Caco-2 (cell line): ENCODE measurements at regions of chr9 and their contacts with region 1.

Region 1: GRCh38 chr9:99184475-99185347 is 37.0 kb downstream of the ALG2 start:
- DNase-seq: peak; percentile 81 to 82
- H3K4me3 ChIP-seq: no peak overlapping the region
- H3K4me3 Mint-ChIP-seq: no peak overlapping the region
- H3K27ac Mint-ChIP-seq: no peak overlapping the region
- H3K4me1 ChIP-seq: peaks cover 11% of the 10 kb centered on the region
- H3K4me1 Mint-ChIP-seq: peaks cover 9% of the 10 kb centered on the region
- H3K27me3 ChIP-seq: no peaks in the 10 kb centered on the region
- H3K27me3 Mint-ChIP-seq: peaks cover 16% of the 10 kb centered on the region
- CTCF ChIP-seq: peak; percentile 93 to 94

Region 2: GRCh38 chr9:99162759-99163364 is 21.8 kb before region 1 on chr9:
- CTCF ChIA-PET with region 1: no interaction called
- POLR2A ChIA-PET with region 1: no interaction called
- intact Hi-C with region 1: no loop called
- DNase-seq: peak in 1 of 2 experiments; percentile 47
- H3K4me3 ChIP-seq: no peak overlapping the region
- H3K4me3 Mint-ChIP-seq: no peak overlapping the region
- H3K27ac Mint-ChIP-seq: no peak overlapping the region
- H3K4me1 ChIP-seq: peaks cover 6% of the 10 kb centered on the region
- H3K4me1 Mint-ChIP-seq: peaks cover 5% of the 10 kb centered on the region
- H3K27me3 ChIP-seq: no peaks in the 10 kb centered on the region; the same call in 1 of the 2 replicates
- H3K27me3 Mint-ChIP-seq: peaks cover 4% of the 10 kb centered on the region
- CTCF ChIP-seq: peak in 1 of 2 experiments; percentile 50

Region 3: GRCh38 chr9:99221621-99222415 is 37.1 kb after region 1 on chr9 and contains the starts of genes ALG2 and SEC61B:
- CTCF ChIA-PET with region 1: interaction called, 3 read pairs
- POLR2A ChIA-PET with region 1: no interaction called
- intact Hi-C with region 1: loop called (anchors 5 kb)
- DNase-seq: peak; percentile 94
- H3K4me3 ChIP-seq: peak within 1 kb of the TSS; percentile 72
- H3K4me3 Mint-ChIP-seq: peak within 1 kb of the TSS; percentile 100
- H3K27ac Mint-ChIP-seq: peak within 1 kb of the TSS; percentile 100
- H3K4me1 ChIP-seq: no peaks in the 10 kb centered on the region
- H3K4me1 Mint-ChIP-seq: peaks cover 21% of the 10 kb centered on the region
- H3K27me3 ChIP-seq: no peaks in the 10 kb centered on the region
- H3K27me3 Mint-ChIP-seq: no peaks in the 10 kb centered on the region
- CTCF ChIP-seq: no peak
- total RNA-seq, gene ALG2: 37.9 and 39.8 TPM in 2 replicates
- total RNA-seq, gene SEC61B: 167 and 170 TPM in 2 replicates

Region 4: GRCh38 chr9:99272836-99273235 is 88.1 kb after region 1 on chr9:
- CTCF ChIA-PET with region 1: no interaction called
- POLR2A ChIA-PET with region 1: no interaction called
- intact Hi-C with region 1: loop called (anchors 5 kb)
- DNase-seq: peak in 1 of 2 experiments; percentile 14
- H3K4me3 ChIP-seq: no peak overlapping the region
- H3K4me3 Mint-ChIP-seq: no peak overlapping the region
- H3K27ac Mint-ChIP-seq: no peak overlapping the region
- H3K4me1 ChIP-seq: peaks cover 14% of the 10 kb centered on the region
- H3K4me1 Mint-ChIP-seq: peaks cover 16% of the 10 kb centered on the region
- H3K27me3 ChIP-seq: no peaks in the 10 kb centered on the region
- H3K27me3 Mint-ChIP-seq: peaks cover 7% of the 10 kb centered on the region
- CTCF ChIP-seq: no peak

Region 5: GRCh38 chr9:100011062-100011681 is 826.5 kb after region 1 on chr9:
- CTCF ChIA-PET with region 1: interaction called, 4 read pairs
- POLR2A ChIA-PET with region 1: no interaction called
- intact Hi-C with region 1: loop called (anchors 5 kb)
- DNase-seq: peak in 1 of 2 experiments; percentile 47
- H3K4me3 ChIP-seq: no peak overlapping the region
- H3K4me3 Mint-ChIP-seq: no peak overlapping the region
- H3K27ac Mint-ChIP-seq: no peak overlapping the region
- H3K4me1 ChIP-seq: no peaks in the 10 kb centered on the region
- H3K4me1 Mint-ChIP-seq: no peaks in the 10 kb centered on the region
- H3K27me3 ChIP-seq: no peaks in the 10 kb centered on the region
- H3K27me3 Mint-ChIP-seq: no peaks in the 10 kb centered on the region
- CTCF ChIP-seq: peak; percentile 39 to 51